Activated CD8-positive, alpha-beta T cell treated with anti-CD3 and anti-CD28 coated beads for 36 hours (primary cell): ENCODE measurements at regions of chr17 and their contacts with region 1.

Region 1: GRCh38 chr17:67993596-67994361 is 2.5 kb downstream of the C17orf58 start:
- DNase-seq: peak; percentile 68
- ATAC-seq: peak; percentile 80
- H3K4me3 Mint-ChIP-seq: peak overlapping the region; percentile 78
- H3K27ac Mint-ChIP-seq: peak overlapping the region; percentile 86
- H3K4me1 Mint-ChIP-seq: peaks cover 29% of the 10 kb centered on the region
- H3K27me3 Mint-ChIP-seq: peaks cover 17% of the 10 kb centered on the region
- CTCF ChIP-seq: no peak

Region 2: DNA sequence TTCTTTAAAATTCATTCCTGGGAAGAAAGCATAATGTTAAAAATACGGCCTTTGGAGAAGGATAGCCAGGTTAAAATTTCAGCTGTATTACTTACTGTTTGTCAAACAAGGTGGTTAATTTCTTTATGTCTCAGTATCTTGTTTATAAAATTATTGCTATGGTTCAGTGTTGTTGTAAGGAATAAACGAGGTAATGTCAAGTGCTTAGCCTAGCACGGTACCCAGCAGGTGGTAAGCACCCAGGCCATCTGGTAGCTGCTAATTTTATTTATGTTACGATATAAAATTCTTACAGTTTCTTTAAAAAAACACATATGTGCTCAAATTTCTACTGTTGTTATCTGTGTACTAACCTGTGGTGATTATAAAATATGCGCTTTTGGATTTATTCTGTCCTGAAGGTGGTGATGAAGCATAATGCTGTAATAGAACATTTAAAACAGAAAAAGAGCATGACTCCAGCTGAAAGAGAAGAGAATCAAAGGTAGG is 46.4 kb before region 1 on chr17:
- CTCF ChIA-PET with region 1: no interaction called
- POLR2A ChIA-PET with region 1: no interaction called
- intact Hi-C with region 1: no loop called
- DNase-seq: no peak
- ATAC-seq: no peak
- H3K4me3 Mint-ChIP-seq: no peak overlapping the region
- H3K27ac Mint-ChIP-seq: no peak overlapping the region
- H3K4me1 Mint-ChIP-seq: no peaks in the 10 kb centered on the region
- H3K27me3 Mint-ChIP-seq: no peaks in the 10 kb centered on the region
- CTCF ChIP-seq: no peak

Region 3: GRCh38 chr17:68011199-68011665 is 17.5 kb after region 1 on chr17:
- CTCF ChIA-PET with region 1: interaction called, 35 read pairs
- POLR2A ChIA-PET with region 1: interaction called, 5 read pairs
- intact Hi-C with region 1: no loop called
- DNase-seq: peak; percentile 77
- ATAC-seq: peak; percentile 93
- H3K4me3 Mint-ChIP-seq: peak overlapping the region; percentile 57
- H3K27ac Mint-ChIP-seq: peak overlapping the region; percentile 25
- H3K4me1 Mint-ChIP-seq: peaks cover 3% of the 10 kb centered on the region
- H3K27me3 Mint-ChIP-seq: no peaks in the 10 kb centered on the region
- CTCF ChIP-seq: peak; percentile 94

Region 4: GRCh38 chr17:68172461-68172954 is 178.7 kb after region 1 on chr17:
- CTCF ChIA-PET with region 1: no interaction called
- POLR2A ChIA-PET with region 1: no interaction called
- intact Hi-C with region 1: no loop called
- DNase-seq: peak; percentile 84
- ATAC-seq: peak; percentile 82
- H3K4me3 Mint-ChIP-seq: no peak overlapping the region
- H3K27ac Mint-ChIP-seq: no peak overlapping the region
- H3K4me1 Mint-ChIP-seq: peaks cover 20% of the 10 kb centered on the region
- H3K27me3 Mint-ChIP-seq: peaks cover 3% of the 10 kb centered on the region
- CTCF ChIP-seq: peak; percentile 99